Activated naive CD4-positive, alpha-beta T cell treated with anti-CD3 and anti-CD28 coated beads for 36 hours (primary cell): ENCODE measurements at regions of chr15 and their contacts with region 1.

Region 1: DNA sequence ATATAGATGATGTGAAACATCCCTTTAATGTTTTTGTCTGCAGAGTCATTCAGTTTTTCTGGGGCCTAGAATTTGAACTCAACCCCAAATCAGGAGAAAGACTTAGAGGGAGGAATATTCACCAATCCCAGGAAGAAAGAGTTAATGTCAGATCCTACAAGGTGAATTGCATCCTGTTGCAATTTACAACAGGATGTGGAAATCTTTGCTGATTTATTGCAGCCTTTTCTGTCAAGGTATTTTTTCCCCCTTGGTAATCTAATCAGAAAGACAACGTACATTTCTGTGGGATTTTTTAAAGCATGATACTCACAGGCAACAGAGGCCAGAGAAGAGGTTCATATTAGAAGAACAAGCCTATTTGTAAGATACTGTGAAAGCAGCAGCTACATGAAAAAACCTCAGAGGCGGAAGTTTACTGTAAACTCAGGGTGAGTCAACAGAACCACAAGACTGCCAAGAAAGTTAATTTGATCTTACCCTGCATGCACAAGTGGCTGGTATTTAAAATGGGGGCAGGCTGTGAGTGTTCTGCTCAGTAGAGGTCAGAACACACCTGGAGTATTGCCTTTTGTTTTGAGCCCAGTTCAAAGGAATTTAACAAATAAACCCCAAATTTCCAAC is 531.9 kb downstream of the AGBL1 start:
- DNase-seq: peak; percentile 12
- H3K4me3 Mint-ChIP-seq: no peak overlapping the region
- H3K27ac Mint-ChIP-seq: no peak overlapping the region
- H3K4me1 Mint-ChIP-seq: peaks cover 40% of the 10 kb centered on the region
- H3K27me3 Mint-ChIP-seq: no peaks in the 10 kb centered on the region

Region 2: DNA sequence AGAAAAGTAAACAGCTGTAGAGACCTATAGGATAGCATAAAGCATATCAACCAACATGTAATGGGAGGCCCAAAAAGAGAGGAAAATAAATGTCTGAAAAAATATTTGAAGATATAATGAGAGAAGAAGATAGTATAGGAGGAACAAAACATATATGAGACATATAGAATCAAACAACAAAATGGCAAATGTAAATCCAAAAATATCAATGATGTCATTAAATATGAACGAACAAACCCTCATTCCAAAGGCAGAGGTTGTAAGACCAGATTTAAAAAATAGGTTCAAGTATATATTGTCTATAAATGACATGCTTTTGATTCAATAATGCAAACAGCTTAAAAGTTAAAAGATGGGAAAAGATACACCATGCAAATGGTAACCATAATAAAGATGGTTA is 61.5 kb before region 1 on chr15:
- CTCF ChIA-PET with region 1: no interaction called
- intact Hi-C with region 1: no loop called
- DNase-seq: no peak
- H3K4me3 Mint-ChIP-seq: no peak overlapping the region
- H3K27ac Mint-ChIP-seq: no peak overlapping the region
- H3K4me1 Mint-ChIP-seq: no peaks in the 10 kb centered on the region
- H3K27me3 Mint-ChIP-seq: peaks cover 3% of the 10 kb centered on the region

Region 3: DNA sequence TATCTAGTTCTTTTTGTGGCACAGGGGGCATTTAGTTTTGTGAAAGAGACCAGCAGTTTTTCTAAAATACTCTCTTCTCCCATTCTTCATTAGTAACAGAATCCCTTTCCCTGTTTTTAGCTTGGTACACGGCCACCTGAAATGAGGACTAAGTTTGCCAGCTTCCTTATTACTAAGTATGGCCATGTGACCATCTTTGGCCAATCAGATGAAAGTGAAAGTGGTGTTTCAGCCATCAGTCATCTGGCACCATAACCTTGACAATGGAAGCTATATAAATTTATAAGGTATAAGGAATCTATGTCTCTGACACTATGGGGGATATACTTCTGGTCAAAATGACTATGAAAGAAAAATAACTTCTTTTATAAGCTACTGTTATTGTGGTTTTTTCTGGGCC is 38.6 kb after region 1 on chr15:
- CTCF ChIA-PET with region 1: interaction called, 3 read pairs
- intact Hi-C with region 1: loop called (anchors 5 kb)
- DNase-seq: peak; percentile 14
- H3K4me3 Mint-ChIP-seq: no peak overlapping the region
- H3K27ac Mint-ChIP-seq: no peak overlapping the region
- H3K4me1 Mint-ChIP-seq: peaks cover 50% of the 10 kb centered on the region
- H3K27me3 Mint-ChIP-seq: no peaks in the 10 kb centered on the region

Region 4: DNA sequence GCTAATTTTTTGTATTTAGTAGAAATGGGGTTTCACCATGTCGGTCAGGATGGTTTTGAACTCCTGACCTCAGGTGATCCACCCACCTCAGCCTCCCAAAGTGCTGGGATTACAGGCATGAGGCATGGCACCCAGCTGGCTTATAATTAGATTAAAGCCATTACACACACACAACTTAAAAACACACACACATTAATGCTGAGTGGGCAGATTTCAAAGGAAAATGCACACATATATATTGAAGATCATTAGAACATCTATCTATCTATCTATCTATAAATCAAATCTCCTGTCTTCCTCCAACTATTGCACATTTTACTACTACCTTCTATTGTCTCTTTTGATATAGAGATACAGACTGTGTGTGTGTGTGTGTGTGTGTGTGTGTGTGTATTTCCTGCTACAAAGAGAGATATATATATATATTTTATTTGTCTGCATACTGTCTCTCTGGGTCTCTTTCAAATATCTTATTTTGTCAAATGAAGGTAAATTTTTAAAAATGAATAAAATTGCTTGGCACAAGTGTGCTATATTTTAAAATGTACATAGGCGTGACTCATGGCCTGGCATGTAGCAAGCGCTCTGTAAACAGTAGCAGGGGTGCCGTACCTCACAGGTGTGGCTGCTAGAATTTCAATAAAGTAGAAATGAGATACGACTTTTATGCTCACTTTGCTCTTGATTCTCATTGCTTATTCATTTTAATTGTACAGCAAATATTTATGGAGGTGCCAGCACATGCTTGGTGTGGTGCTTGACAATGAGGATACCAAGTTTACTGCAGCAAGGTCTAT is 123.9 kb after region 1 on chr15:
- CTCF ChIA-PET with region 1: no interaction called
- intact Hi-C with region 1: no loop called
- DNase-seq: no peak
- H3K4me3 Mint-ChIP-seq: no peak overlapping the region
- H3K27ac Mint-ChIP-seq: no peak overlapping the region
- H3K4me1 Mint-ChIP-seq: no peaks in the 10 kb centered on the region
- H3K27me3 Mint-ChIP-seq: no peaks in the 10 kb centered on the region

Region 5: GRCh38 chr15:86756692-86757091 is 145.2 kb after region 1 on chr15:
- CTCF ChIA-PET with region 1: no interaction called
- intact Hi-C with region 1: no loop called
- DNase-seq: no peak
- H3K4me3 Mint-ChIP-seq: no peak overlapping the region
- H3K27ac Mint-ChIP-seq: no peak overlapping the region
- H3K4me1 Mint-ChIP-seq: no peaks in the 10 kb centered on the region
- H3K27me3 Mint-ChIP-seq: peaks cover 15% of the 10 kb centered on the region